HCT116 (cell line): ENCODE measurements at regions of chr2 and their contacts with region 1.

Region 1: GRCh38 chr2:85728883-85729824 is 24.6 kb upstream of the ATOH8 start:
- DNase-seq: peak; percentile 39
- ATAC-seq: peak; percentile 99
- H3K4me3 ChIP-seq: no peak overlapping the region
- H3K27ac ChIP-seq: no peak overlapping the region
- H3K4me1 ChIP-seq: peaks cover 2 to 8% of the 10 kb centered on the region in 2 experiments; a peak in 2 of 4 replicates
- H3K27me3 ChIP-seq: 0 out of 2 replicates have a peak, but pooled peaks cover 3% of the 10 kb centered on the region
- CTCF ChIP-seq: peak; percentile 95 to 99 (median 96)
- POLR2A ChIP-seq: no peak
- RAD21 ChIP-seq: peak; percentile 99

Region 2: DNA sequence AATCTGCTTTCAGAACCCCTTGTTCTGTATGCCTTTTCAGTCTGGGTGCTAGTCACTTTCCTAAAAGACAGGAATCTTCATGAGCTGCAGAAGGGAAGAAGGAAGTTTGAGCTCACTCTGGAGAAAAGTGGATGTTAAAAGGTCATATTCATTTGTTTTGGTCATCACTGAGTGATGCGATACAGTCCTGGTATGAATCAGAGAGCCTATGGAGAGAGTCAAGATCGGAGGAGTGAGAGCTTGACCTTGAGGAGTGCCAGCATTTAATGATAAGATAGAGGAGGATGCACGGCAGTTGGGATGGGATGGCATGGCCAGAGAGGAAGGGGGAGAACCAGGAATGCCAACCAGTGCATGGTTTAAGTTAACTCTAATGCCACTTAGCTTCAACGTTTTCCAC is 93.5 kb before region 1 on chr2:
- CTCF ChIA-PET with region 1: interaction called, 6 read pairs
- POLR2A ChIA-PET with region 1: no interaction called
- RAD21 ChIA-PET with region 1: no interaction called
- intact Hi-C with region 1: loop called (anchors 5 kb)
- DNase-seq: no peak
- ATAC-seq: no peak
- H3K4me3 ChIP-seq: no peak overlapping the region
- H3K27ac ChIP-seq: no peak overlapping the region
- H3K4me1 ChIP-seq: no peaks in the 10 kb centered on the region
- H3K27me3 ChIP-seq: no peaks in the 10 kb centered on the region
- CTCF ChIP-seq: no peak
- POLR2A ChIP-seq: no peak
- RAD21 ChIP-seq: no peak

Region 3: GRCh38 chr2:85678794-85679672 is 50.1 kb before region 1 on chr2:
- CTCF ChIA-PET with region 1: interaction called, 3 read pairs
- POLR2A ChIA-PET with region 1: no interaction called
- RAD21 ChIA-PET with region 1: no interaction called
- intact Hi-C with region 1: loop called (anchors 1 kb)
- DNase-seq: peak; percentile 50
- ATAC-seq: peak; percentile 96
- H3K4me3 ChIP-seq: peak overlapping the region; percentile 31 to 46
- H3K27ac ChIP-seq: no peak overlapping the region; the same call in 1 of the 2 replicates
- H3K4me1 ChIP-seq: peaks cover 13 to 31% of the 10 kb centered on the region in 2 experiments
- H3K27me3 ChIP-seq: no peaks in the 10 kb centered on the region
- CTCF ChIP-seq: peak; percentile 90 to 96 (median 94)
- POLR2A ChIP-seq: no peak
- RAD21 ChIP-seq: peak; percentile 92

Region 4: GRCh38 chr2:85799215-85799956 is 70.2 kb after region 1 on chr2:
- CTCF ChIA-PET with region 1: interaction called, 10 read pairs
- POLR2A ChIA-PET with region 1: no interaction called
- RAD21 ChIA-PET with region 1: no interaction called
- intact Hi-C with region 1: no loop called
- DNase-seq: peak; percentile 19
- ATAC-seq: peak; percentile 91
- H3K4me3 ChIP-seq: no peak overlapping the region
- H3K27ac ChIP-seq: no peak overlapping the region
- H3K4me1 ChIP-seq: peaks cover 11 to 15% of the 10 kb centered on the region in 2 experiments; a peak in 3 of 4 replicates
- H3K27me3 ChIP-seq: no peaks in the 10 kb centered on the region
- CTCF ChIP-seq: no peak
- POLR2A ChIP-seq: no peak
- RAD21 ChIP-seq: no peak

Region 5: GRCh38 chr2:85813982-85814801 is 85.0 kb after region 1 on chr2:
- CTCF ChIA-PET with region 1: interaction called, 55 read pairs
- POLR2A ChIA-PET with region 1: interaction called, 3 read pairs
- RAD21 ChIA-PET with region 1: interaction called, 10 to 19 read pairs
- intact Hi-C with region 1: loop called (anchors 1 kb)
- DNase-seq: peak; percentile 76
- ATAC-seq: peak; percentile 99
- H3K4me3 ChIP-seq: no peak overlapping the region
- H3K27ac ChIP-seq: no peak overlapping the region
- H3K4me1 ChIP-seq: no peaks in the 10 kb centered on the region
- H3K27me3 ChIP-seq: no peaks in the 10 kb centered on the region
- CTCF ChIP-seq: peak; percentile 93 to 98 (median 96)
- POLR2A ChIP-seq: no peak
- RAD21 ChIP-seq: peak; percentile 99

Region 6: GRCh38 chr2:86079981-86080911 is 351.1 kb after region 1 on chr2:
- CTCF ChIA-PET with region 1: interaction called, 4 read pairs
- POLR2A ChIA-PET with region 1: no interaction called
- RAD21 ChIA-PET with region 1: no interaction called
- intact Hi-C with region 1: loop called (anchors 10 kb)
- DNase-seq: peak; percentile 24
- ATAC-seq: peak; percentile 94
- H3K4me3 ChIP-seq: no peak overlapping the region
- H3K27ac ChIP-seq: no peak overlapping the region
- H3K4me1 ChIP-seq: no peaks in the 10 kb centered on the region
- H3K27me3 ChIP-seq: no peaks in the 10 kb centered on the region
- CTCF ChIP-seq: peak; percentile 75 to 89 (median 84)
- POLR2A ChIP-seq: no peak
- RAD21 ChIP-seq: peak; percentile 79